ENCODE measurements at regions of chr6 and their contacts with region 1.

Region 1: DNA sequence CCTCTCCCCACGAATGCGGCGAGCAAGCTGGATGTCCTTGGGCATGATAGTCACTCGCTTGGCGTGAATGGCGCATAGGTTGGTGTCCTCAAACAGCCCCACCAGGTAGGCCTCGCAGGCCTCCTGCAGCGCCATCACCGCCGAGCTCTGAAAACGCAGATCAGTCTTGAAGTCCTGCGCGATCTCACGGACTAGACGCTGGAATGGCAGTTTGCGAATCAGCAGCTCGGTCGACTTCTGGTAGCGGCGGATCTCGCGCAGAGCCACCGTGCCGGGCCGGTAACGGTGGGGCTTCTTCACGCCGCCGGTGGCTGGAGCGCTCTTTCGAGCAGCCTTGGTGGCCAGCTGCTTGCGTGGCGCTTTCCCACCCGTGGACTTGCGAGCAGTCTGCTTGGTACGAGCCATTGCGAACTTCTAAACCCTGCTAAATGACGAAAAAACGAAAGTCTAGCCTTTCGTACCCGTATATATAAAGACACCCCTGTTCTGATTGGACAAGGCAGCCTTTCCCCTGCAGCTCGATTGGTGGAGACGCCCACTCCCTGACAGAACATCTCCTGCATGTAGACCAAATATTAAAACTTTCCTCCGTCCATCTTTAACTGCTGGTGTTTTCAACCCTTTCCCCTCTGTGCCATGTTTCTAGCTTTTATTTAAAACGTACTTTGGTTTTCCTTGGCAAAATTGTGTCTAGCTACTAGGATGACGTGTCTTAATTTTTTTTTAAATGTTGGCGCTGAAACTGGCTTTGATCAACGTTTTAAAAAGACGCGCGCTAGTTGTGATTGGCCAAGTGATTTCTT is 109.8 kb downstream of the HFE start:
- DNase-seq: peak; percentile 60 to 97 (median 70)
- ATAC-seq: peak; percentile 55
- H3K4me3 ChIP-seq: peak overlapping the region; percentile 75
- H3K4me3 Mint-ChIP-seq: peak overlapping the region; percentile 94
- H3K27ac ChIP-seq: peak overlapping the region; percentile 81 to 87
- H3K27ac Mint-ChIP-seq: peak overlapping the region; percentile 97
- H3K4me1 ChIP-seq: peaks cover 26% of the 10 kb centered on the region
- H3K4me1 Mint-ChIP-seq: peaks cover 57% of the 10 kb centered on the region
- H3K27me3 ChIP-seq: no peaks in the 10 kb centered on the region
- H3K27me3 Mint-ChIP-seq: no peaks in the 10 kb centered on the region
- CTCF ChIP-seq: no peak

Region 2: GRCh38 chr6:26031595-26032339 is 165.3 kb before region 1 on chr6:
- CTCF ChIA-PET with region 1: no interaction called
- POLR2A ChIA-PET with region 1: interaction called, 101 read pairs
- intact Hi-C with region 1: loop called (anchors 5 kb)
- DNase-seq: peak; percentile 73 to 94 (median 81)
- ATAC-seq: peak; percentile 65
- H3K4me3 ChIP-seq: peak overlapping the region; percentile 64
- H3K4me3 Mint-ChIP-seq: peak overlapping the region; percentile 97
- H3K27ac ChIP-seq: peak overlapping the region; percentile 42 to 72
- H3K27ac Mint-ChIP-seq: peak overlapping the region; percentile 99
- H3K4me1 ChIP-seq: peaks cover 35% of the 10 kb centered on the region
- H3K4me1 Mint-ChIP-seq: peaks cover 46% of the 10 kb centered on the region
- H3K27me3 ChIP-seq: no peaks in the 10 kb centered on the region
- H3K27me3 Mint-ChIP-seq: no peaks in the 10 kb centered on the region
- CTCF ChIP-seq: peak; percentile 22

Region 3: GRCh38 chr6:26122793-26123674 is 74.0 kb before region 1 on chr6:
- CTCF ChIA-PET with region 1: interaction called, 5 read pairs
- POLR2A ChIA-PET with region 1: interaction called, 1,005 read pairs
- intact Hi-C with region 1: loop called (anchors 1 kb)
- DNase-seq: peak; percentile 75 to 98 (median 92)
- ATAC-seq: peak; percentile 56
- H3K4me3 ChIP-seq: peak overlapping the region; percentile 88
- H3K4me3 Mint-ChIP-seq: peak overlapping the region; percentile 97
- H3K27ac ChIP-seq: peak overlapping the region; percentile 84 to 95
- H3K27ac Mint-ChIP-seq: peak overlapping the region; percentile 98
- H3K4me1 ChIP-seq: peaks cover 23% of the 10 kb centered on the region
- H3K4me1 Mint-ChIP-seq: peaks cover 41% of the 10 kb centered on the region
- H3K27me3 ChIP-seq: no peaks in the 10 kb centered on the region
- H3K27me3 Mint-ChIP-seq: peaks cover 13% of the 10 kb centered on the region
- CTCF ChIP-seq: no peak

Region 4: GRCh38 chr6:26234421-26235296 is 37.6 kb after region 1 on chr6:
- CTCF ChIA-PET with region 1: interaction called, 10 read pairs
- POLR2A ChIA-PET with region 1: interaction called, 637 read pairs
- intact Hi-C with region 1: loop called in 1 of 2 experiments (anchors 2 kb)
- DNase-seq: peak; percentile 46 to 96 (median 67)
- ATAC-seq: peak; percentile 73
- H3K4me3 ChIP-seq: peak overlapping the region; percentile 66
- H3K4me3 Mint-ChIP-seq: peak overlapping the region; percentile 100
- H3K27ac ChIP-seq: peak overlapping the region; percentile 78 to 87
- H3K27ac Mint-ChIP-seq: peak overlapping the region; percentile 99
- H3K4me1 ChIP-seq: peaks cover 19% of the 10 kb centered on the region
- H3K4me1 Mint-ChIP-seq: peaks cover 42% of the 10 kb centered on the region
- H3K27me3 ChIP-seq: no peaks in the 10 kb centered on the region
- H3K27me3 Mint-ChIP-seq: peaks cover 8% of the 10 kb centered on the region
- CTCF ChIP-seq: no peak

Region 5: GRCh38 chr6:26304797-26305640 is 108.0 kb after region 1 on chr6:
- CTCF ChIA-PET with region 1: interaction called, 3 read pairs
- POLR2A ChIA-PET with region 1: interaction called, 31 read pairs
- intact Hi-C with region 1: no loop called
- DNase-seq: peak in 12 of 14 experiments; percentile 48 to 90 (median 62)
- ATAC-seq: peak; percentile 73
- H3K4me3 ChIP-seq: peak overlapping the region; percentile 60
- H3K4me3 Mint-ChIP-seq: peak overlapping the region; percentile 93
- H3K27ac ChIP-seq: peak overlapping the region in 1 of 2 donors; percentile 26
- H3K27ac Mint-ChIP-seq: peak overlapping the region; percentile 93
- H3K4me1 ChIP-seq: peaks cover 5% of the 10 kb centered on the region
- H3K4me1 Mint-ChIP-seq: peaks cover 33% of the 10 kb centered on the region
- H3K27me3 ChIP-seq: no peaks in the 10 kb centered on the region
- H3K27me3 Mint-ChIP-seq: peaks cover 12% of the 10 kb centered on the region
- CTCF ChIP-seq: no peak

Region 6: GRCh38 chr6:27132532-27133280 is 935.7 kb after region 1 on chr6:
- CTCF ChIA-PET with region 1: no interaction called
- POLR2A ChIA-PET with region 1: interaction called, 82 read pairs
- intact Hi-C with region 1: loop called (anchors 1 to 10 kb)
- DNase-seq: peak; percentile 80 to 99 (median 88)
- ATAC-seq: peak; percentile 79
- H3K4me3 ChIP-seq: peak overlapping the region; percentile 75
- H3K4me3 Mint-ChIP-seq: no peak overlapping the region
- H3K27ac ChIP-seq: peak overlapping the region; percentile 79 to 81
- H3K27ac Mint-ChIP-seq: no peak overlapping the region
- H3K4me1 ChIP-seq: peaks cover 31% of the 10 kb centered on the region
- H3K4me1 Mint-ChIP-seq: peaks cover 12% of the 10 kb centered on the region
- H3K27me3 ChIP-seq: no peaks in the 10 kb centered on the region
- H3K27me3 Mint-ChIP-seq: no peaks in the 10 kb centered on the region
- CTCF ChIP-seq: no peak

Region 7: GRCh38 chr6:27838058-27838944 is 1641.3 kb after region 1 on chr6:
- CTCF ChIA-PET with region 1: no interaction called
- POLR2A ChIA-PET with region 1: interaction called, 129 read pairs
- intact Hi-C with region 1: no loop called
- DNase-seq: peak; percentile 52 to 98 (median 73)
- ATAC-seq: peak; percentile 73
- H3K4me3 ChIP-seq: peak overlapping the region; percentile 83
- H3K4me3 Mint-ChIP-seq: no peak overlapping the region
- H3K27ac ChIP-seq: peak overlapping the region; percentile 92 to 97
- H3K27ac Mint-ChIP-seq: no peak overlapping the region
- H3K4me1 ChIP-seq: peaks cover 32% of the 10 kb centered on the region
- H3K4me1 Mint-ChIP-seq: peaks cover 6% of the 10 kb centered on the region
- H3K27me3 ChIP-seq: peaks cover 0 to 6% of the 10 kb centered on the region in 2 experiments
- H3K27me3 Mint-ChIP-seq: peaks cover 12% of the 10 kb centered on the region
- CTCF ChIP-seq: no peak